Caco-2 (cell line): ENCODE measurements at regions of chr14 and their contacts with region 1.

Region 1: DNA sequence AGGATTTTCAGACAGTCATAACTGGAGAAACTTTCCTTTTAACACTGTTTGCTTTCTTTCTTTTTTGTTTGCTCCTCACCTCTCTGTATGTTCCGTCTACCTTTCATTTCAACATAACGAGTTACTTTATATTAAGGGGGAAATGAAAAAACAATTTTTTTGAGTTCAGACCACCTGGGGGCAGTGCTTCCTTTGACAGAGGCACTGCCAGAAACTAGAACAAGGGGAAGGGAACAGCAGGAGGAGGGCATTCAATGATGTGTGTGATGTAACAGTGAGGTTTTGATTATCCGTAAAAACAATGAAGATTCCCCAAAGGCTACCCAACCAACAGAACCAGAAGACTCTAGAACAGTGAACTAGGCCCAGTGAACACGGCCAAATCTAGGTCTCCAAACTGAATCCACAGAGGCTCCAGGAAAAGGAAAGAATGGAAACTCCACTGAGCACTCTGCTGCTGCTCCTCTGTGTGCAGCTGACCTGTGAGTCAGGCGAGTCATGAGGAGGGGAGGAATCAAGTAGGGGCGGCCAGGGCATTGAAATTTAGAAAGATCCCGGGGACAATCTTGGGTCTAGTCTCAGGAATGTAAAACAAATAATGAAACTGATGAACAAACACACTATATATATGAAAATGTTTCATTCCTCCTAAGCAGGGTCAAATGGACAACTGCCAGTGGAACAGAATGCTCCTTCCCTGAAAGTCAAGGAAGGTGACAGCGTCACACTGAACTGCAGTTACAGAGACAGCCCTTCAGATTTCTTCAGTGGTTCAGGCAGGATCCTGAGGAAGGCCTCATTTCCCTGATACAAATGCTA is 323.5 kb downstream of the DAD1 start:
- DNase-seq: peak; percentile 39 to 59
- H3K4me3 ChIP-seq: no peak overlapping the region
- H3K4me3 Mint-ChIP-seq: peak overlapping the region; percentile 41
- H3K27ac Mint-ChIP-seq: peak overlapping the region; percentile 68
- H3K4me1 ChIP-seq: peaks cover 45% of the 10 kb centered on the region
- H3K4me1 Mint-ChIP-seq: peaks cover 48% of the 10 kb centered on the region
- H3K27me3 ChIP-seq: no peaks in the 10 kb centered on the region
- H3K27me3 Mint-ChIP-seq: no peaks in the 10 kb centered on the region
- CTCF ChIP-seq: peak; percentile 38 to 49

Region 2: DNA sequence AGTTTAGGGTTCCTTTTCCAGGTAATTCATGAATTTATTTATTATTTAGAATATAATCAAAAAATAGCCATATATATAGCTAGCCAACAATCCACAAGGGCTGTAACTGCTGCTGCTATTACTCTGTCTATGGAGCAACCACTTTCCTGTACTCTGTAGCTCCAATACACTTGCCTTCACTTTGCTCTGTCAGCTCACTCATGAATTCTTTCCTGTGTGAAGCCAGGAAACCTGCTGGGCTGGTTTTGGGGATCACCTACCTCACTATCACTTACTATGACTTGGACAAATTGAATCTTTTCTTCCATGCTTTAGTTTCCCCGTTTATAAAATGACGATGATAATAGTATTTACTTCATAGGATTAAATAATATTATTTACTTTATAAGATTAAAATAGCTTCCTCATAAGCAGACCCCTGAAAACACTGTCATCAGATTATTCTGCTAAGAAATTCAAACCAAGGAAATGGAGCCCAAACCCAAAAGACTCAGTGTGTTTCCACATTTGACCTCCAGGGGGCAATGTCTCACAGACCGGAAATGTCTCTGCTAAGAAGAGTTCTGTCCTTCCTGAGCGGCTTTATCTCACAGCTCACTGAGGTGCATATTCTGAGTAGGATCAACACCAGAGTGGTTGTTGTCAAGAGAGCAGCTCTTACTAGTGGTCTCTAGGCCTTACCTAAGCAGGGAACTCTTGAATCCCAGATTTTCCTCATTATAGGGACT is 133.6 kb before region 1 on chr14:
- CTCF ChIA-PET with region 1: no interaction called
- POLR2A ChIA-PET with region 1: no interaction called
- intact Hi-C with region 1: no loop called
- DNase-seq: peak in 1 of 2 experiments; percentile 37
- H3K4me3 ChIP-seq: no peak overlapping the region
- H3K4me3 Mint-ChIP-seq: no peak overlapping the region
- H3K27ac Mint-ChIP-seq: no peak overlapping the region
- H3K4me1 ChIP-seq: no peaks in the 10 kb centered on the region
- H3K4me1 Mint-ChIP-seq: no peaks in the 10 kb centered on the region
- H3K27me3 ChIP-seq: no peaks in the 10 kb centered on the region
- H3K27me3 Mint-ChIP-seq: peaks cover 11% of the 10 kb centered on the region
- CTCF ChIP-seq: peak; percentile 44 to 51

Region 3: GRCh38 chr14:22296722-22297121 is 31.2 kb after region 1 on chr14:
- CTCF ChIA-PET with region 1: no interaction called
- POLR2A ChIA-PET with region 1: no interaction called
- intact Hi-C with region 1: loop called (anchors 2 kb)
- DNase-seq: peak in 1 of 2 experiments; percentile 68
- H3K4me3 ChIP-seq: no peak overlapping the region
- H3K4me3 Mint-ChIP-seq: no peak overlapping the region
- H3K27ac Mint-ChIP-seq: peak overlapping the region; percentile 67
- H3K4me1 ChIP-seq: peaks cover 48% of the 10 kb centered on the region
- H3K4me1 Mint-ChIP-seq: peaks cover 34% of the 10 kb centered on the region
- H3K27me3 ChIP-seq: no peaks in the 10 kb centered on the region
- H3K27me3 Mint-ChIP-seq: no peaks in the 10 kb centered on the region
- CTCF ChIP-seq: no peak

Region 4: DNA sequence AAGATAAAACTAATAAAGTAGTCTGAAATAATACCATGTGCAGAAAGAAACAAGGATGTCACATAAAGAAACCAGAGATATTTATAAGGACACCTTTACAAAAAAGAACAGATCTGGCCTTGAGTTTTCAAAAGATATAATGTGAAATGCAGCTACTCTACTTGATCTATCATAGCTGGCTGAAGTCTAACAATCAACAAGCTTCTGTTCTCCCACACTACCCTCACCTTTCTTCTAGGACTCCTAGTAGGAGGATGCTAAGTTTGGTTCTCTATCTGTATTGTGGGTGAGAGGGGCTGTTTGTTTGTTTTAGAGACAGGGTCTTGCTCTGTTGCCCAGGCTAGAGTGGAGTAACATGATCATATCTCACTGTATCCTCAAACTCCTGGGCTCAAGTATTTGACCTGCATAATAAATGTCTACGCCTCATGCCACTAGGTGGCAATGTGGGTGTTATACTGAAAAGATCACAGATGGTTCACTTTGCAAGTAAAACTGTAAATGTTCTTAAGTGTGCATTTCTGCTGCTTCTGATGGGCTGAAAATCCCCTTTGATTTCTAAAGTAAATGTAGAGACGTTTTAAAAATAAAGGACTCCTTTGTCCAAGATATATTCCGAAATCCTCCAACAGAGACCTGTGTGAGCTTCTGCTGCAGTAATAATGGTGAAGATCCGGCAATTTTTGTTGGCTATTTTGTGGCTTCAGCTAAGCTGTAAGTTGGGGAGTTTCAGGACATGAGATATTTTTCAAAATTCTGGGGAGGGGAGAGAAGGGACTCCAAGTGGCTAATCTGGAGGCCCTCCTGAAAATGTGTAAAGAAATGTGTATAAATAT is 54.2 kb after region 1 on chr14:
- CTCF ChIA-PET with region 1: interaction called, 7 read pairs
- POLR2A ChIA-PET with region 1: no interaction called
- intact Hi-C with region 1: loop called (anchors 5 kb)
- DNase-seq: peak; percentile 67 to 72
- H3K4me3 ChIP-seq: no peak overlapping the region
- H3K4me3 Mint-ChIP-seq: no peak overlapping the region
- H3K27ac Mint-ChIP-seq: peak overlapping the region; percentile 34
- H3K4me1 ChIP-seq: peaks cover 14% of the 10 kb centered on the region; the same call in 1 of the 2 replicates
- H3K4me1 Mint-ChIP-seq: peaks cover 22% of the 10 kb centered on the region
- H3K27me3 ChIP-seq: no peaks in the 10 kb centered on the region
- H3K27me3 Mint-ChIP-seq: no peaks in the 10 kb centered on the region
- CTCF ChIP-seq: peak; percentile 61 to 69

Region 5: GRCh38 chr14:22472935-22473854 is 207.7 kb after region 1 on chr14:
- CTCF ChIA-PET with region 1: no interaction called
- POLR2A ChIA-PET with region 1: no interaction called
- intact Hi-C with region 1: loop called (anchors 5 kb)
- DNase-seq: peak; percentile 39 to 55
- H3K4me3 ChIP-seq: no peak overlapping the region
- H3K4me3 Mint-ChIP-seq: no peak overlapping the region
- H3K27ac Mint-ChIP-seq: no peak overlapping the region
- H3K4me1 ChIP-seq: peaks cover 4% of the 10 kb centered on the region; the same call in 1 of the 2 replicates
- H3K4me1 Mint-ChIP-seq: peaks cover 13% of the 10 kb centered on the region
- H3K27me3 ChIP-seq: no peaks in the 10 kb centered on the region
- H3K27me3 Mint-ChIP-seq: no peaks in the 10 kb centered on the region
- CTCF ChIP-seq: peak; percentile 60 to 66